CD4-positive, alpha-beta memory T cell (primary cell): ENCODE measurements at regions of chr2 and their contacts with region 1.

Region 1: GRCh38 chr2:165401285-165401852 is 68.1 kb upstream of the CSRNP3 start:
- DNase-seq: peak in 4 of 5 donors; percentile 16 to 30 (median 28)
- H3K4me3 ChIP-seq: no peak overlapping the region
- H3K4me3 Mint-ChIP-seq: no peak overlapping the region
- H3K27ac ChIP-seq: no peak overlapping the region
- H3K27ac Mint-ChIP-seq: no peak overlapping the region
- H3K4me1 ChIP-seq: no peaks in the 10 kb centered on the region
- H3K4me1 Mint-ChIP-seq: no peaks in the 10 kb centered on the region
- H3K27me3 ChIP-seq: no peaks in the 10 kb centered on the region
- H3K27me3 Mint-ChIP-seq: peaks cover 0 to 12% of the 10 kb centered on the region in 2 donors

Region 2: DNA sequence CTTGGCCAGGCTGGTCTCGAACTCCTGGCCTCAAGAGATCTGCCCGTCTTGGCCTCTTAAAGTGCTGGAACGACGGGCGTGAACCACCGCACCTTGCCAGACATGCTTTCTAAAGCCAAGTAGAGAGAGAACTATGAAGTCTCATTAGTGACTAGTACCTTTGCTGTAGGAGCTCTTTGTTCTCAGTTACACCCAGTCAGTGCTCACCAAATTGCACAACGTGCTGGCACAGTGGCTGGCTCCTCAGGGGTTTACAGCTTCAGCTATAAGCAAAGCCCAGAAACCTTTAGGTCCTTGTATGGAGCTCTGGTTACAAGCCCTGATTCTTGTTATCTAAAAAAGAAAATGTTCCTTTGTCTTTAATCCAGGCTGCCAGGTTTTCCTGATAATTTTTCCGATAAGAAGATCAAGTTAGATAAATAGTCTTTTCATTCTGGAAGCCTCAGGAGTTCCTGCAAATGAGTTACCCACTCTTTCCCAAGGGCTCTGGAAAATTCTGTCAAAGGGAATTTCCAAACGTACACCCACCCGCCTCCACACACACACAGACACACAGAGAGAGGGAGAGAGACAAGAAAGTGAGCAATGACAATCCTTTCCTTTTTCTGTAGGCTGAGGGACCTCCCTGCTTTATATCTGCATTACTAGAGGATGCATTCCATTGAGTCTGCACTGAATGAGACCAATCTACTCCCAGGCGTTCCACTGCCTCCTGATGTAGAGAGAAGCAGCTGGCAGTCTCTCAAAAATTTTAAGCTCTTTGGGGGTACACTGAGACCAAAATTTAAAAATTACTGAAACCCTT is 32.0 kb before region 1 on chr2:
- CTCF ChIA-PET with region 1: no interaction called
- POLR2A ChIA-PET with region 1: no interaction called
- intact Hi-C with region 1: no loop called
- DNase-seq: no peak
- H3K4me3 ChIP-seq: no peak overlapping the region
- H3K4me3 Mint-ChIP-seq: no peak overlapping the region
- H3K27ac ChIP-seq: no peak overlapping the region
- H3K27ac Mint-ChIP-seq: peak overlapping the region in 1 of 7 donors; percentile 29
- H3K4me1 ChIP-seq: no peaks in the 10 kb centered on the region
- H3K4me1 Mint-ChIP-seq: no peaks in the 10 kb centered on the region
- H3K27me3 ChIP-seq: no peaks in the 10 kb centered on the region
- H3K27me3 Mint-ChIP-seq: no peaks in the 10 kb centered on the region

Region 3: DNA sequence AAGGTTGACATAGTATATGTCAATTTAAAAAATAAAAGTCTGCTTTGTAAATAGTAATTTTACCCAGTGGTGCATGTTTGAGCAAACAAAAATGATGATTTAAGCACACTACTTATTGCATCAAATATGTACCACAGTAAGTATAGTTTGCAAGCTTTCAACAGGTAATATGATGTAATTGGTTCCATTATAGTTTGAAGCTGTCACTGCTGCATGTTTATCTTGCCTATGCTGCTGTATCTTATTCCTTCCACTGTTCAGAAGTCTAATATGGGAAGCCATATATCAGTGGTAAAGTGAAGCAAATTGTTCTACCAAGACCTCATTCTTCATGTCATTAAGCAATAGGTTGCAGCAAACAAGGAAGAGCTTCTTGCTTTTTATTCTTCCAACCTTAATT is 10.5 kb before region 1 on chr2:
- CTCF ChIA-PET with region 1: interaction called, 14 read pairs
- POLR2A ChIA-PET with region 1: no interaction called
- intact Hi-C with region 1: no loop called
- DNase-seq: no peak
- H3K4me3 ChIP-seq: no peak overlapping the region
- H3K4me3 Mint-ChIP-seq: no peak overlapping the region
- H3K27ac ChIP-seq: no peak overlapping the region
- H3K27ac Mint-ChIP-seq: no peak overlapping the region
- H3K4me1 ChIP-seq: no peaks in the 10 kb centered on the region
- H3K4me1 Mint-ChIP-seq: peaks cover 0 to 4% (median under 1%) of the 10 kb centered on the region in 4 donors
- H3K27me3 ChIP-seq: no peaks in the 10 kb centered on the region
- H3K27me3 Mint-ChIP-seq: peaks cover 3 to 4% of the 10 kb centered on the region in 2 donors

Region 4: GRCh38 chr2:165469417-165469816 is 68.0 kb after region 1 on chr2 and contains the start of gene CSRNP3:
- CTCF ChIA-PET with region 1: no interaction called
- POLR2A ChIA-PET with region 1: no interaction called
- intact Hi-C with region 1: no loop called
- DNase-seq: no peak
- H3K4me3 ChIP-seq: no peak within 1 kb of the TSS
- H3K4me3 Mint-ChIP-seq: no peak within 1 kb of the TSS
- H3K27ac ChIP-seq: no peak within 1 kb of the TSS
- H3K27ac Mint-ChIP-seq: no peak within 1 kb of the TSS
- H3K4me1 ChIP-seq: no peaks in the 10 kb centered on the region
- H3K4me1 Mint-ChIP-seq: no peaks in the 10 kb centered on the region
- H3K27me3 ChIP-seq: no peaks in the 10 kb centered on the region
- H3K27me3 Mint-ChIP-seq: peaks cover 1 to 5% of the 10 kb centered on the region in 2 donors
- total RNA-seq, gene CSRNP3: not detected

Region 5: GRCh38 chr2:165594935-165595255 is 193.5 kb after region 1 on chr2:
- CTCF ChIA-PET with region 1: no interaction called
- POLR2A ChIA-PET with region 1: no interaction called
- intact Hi-C with region 1: no loop called
- DNase-seq: no peak
- H3K4me3 ChIP-seq: no peak overlapping the region
- H3K4me3 Mint-ChIP-seq: no peak overlapping the region
- H3K27ac ChIP-seq: no peak overlapping the region
- H3K27ac Mint-ChIP-seq: peak overlapping the region in 1 of 7 donors; percentile 46
- H3K4me1 ChIP-seq: no peaks in the 10 kb centered on the region
- H3K4me1 Mint-ChIP-seq: no peaks in the 10 kb centered on the region
- H3K27me3 ChIP-seq: no peaks in the 10 kb centered on the region
- H3K27me3 Mint-ChIP-seq: no peaks in the 10 kb centered on the region

Region 6: GRCh38 chr2:165874445-165875039 is 473.2 kb after region 1 on chr2:
- CTCF ChIA-PET with region 1: interaction called, 48 read pairs
- POLR2A ChIA-PET with region 1: no interaction called
- intact Hi-C with region 1: no loop called
- DNase-seq: peak in 4 of 5 donors; percentile 51 to 62 (median 56)
- H3K4me3 ChIP-seq: no peak overlapping the region
- H3K4me3 Mint-ChIP-seq: peak overlapping the region in 3 of 8 donors; percentile 20 to 47 (median 29)
- H3K27ac ChIP-seq: no peak overlapping the region
- H3K27ac Mint-ChIP-seq: peak overlapping the region in 5 of 7 donors; percentile 5 to 79 (median 66)
- H3K4me1 ChIP-seq: peaks cover 14% of the 10 kb centered on the region
- H3K4me1 Mint-ChIP-seq: peaks cover 4 to 20% (median 8%) of the 10 kb centered on the region in 4 donors
- H3K27me3 ChIP-seq: no peaks in the 10 kb centered on the region
- H3K27me3 Mint-ChIP-seq: no peaks in the 10 kb centered on the region

Region 7: GRCh38 chr2:166127217-166128155 is 726.1 kb after region 1 on chr2 and contains the start of gene SCN1A:
- CTCF ChIA-PET with region 1: interaction called, 6 read pairs
- POLR2A ChIA-PET with region 1: no interaction called
- intact Hi-C with region 1: loop called (anchors 1 kb)
- DNase-seq: peak in 4 of 5 donors; percentile 24 to 41 (median 36)
- H3K4me3 ChIP-seq: no peak within 1 kb of the TSS
- H3K4me3 Mint-ChIP-seq: no peak within 1 kb of the TSS
- H3K27ac ChIP-seq: no peak within 1 kb of the TSS
- H3K27ac Mint-ChIP-seq: peak within 1 kb of the TSS in 1 of 7 donors; percentile 42
- H3K4me1 ChIP-seq: no peaks in the 10 kb centered on the region
- H3K4me1 Mint-ChIP-seq: peaks cover 0 to 4% (median 3%) of the 10 kb centered on the region in 4 donors
- H3K27me3 ChIP-seq: no peaks in the 10 kb centered on the region
- H3K27me3 Mint-ChIP-seq: peaks cover 9 to 14% of the 10 kb centered on the region in 2 donors
- total RNA-seq, gene SCN1A: not detected